ENCODE measurements at regions of chr22 and their contacts with region 1.

Region 1: GRCh38 chr22:26461188-26461810 is 22.3 kb downstream of the HPS4 start:
- DNase-seq: peak in 1 of 2 experiments; percentile 16
- H3K4me3 ChIP-seq: no peak overlapping the region
- H3K27ac ChIP-seq: no peak overlapping the region
- H3K4me1 ChIP-seq: no peaks in the 10 kb centered on the region
- H3K27me3 ChIP-seq: no peaks in the 10 kb centered on the region
- CTCF ChIP-seq: peak; percentile 86

Region 2: DNA sequence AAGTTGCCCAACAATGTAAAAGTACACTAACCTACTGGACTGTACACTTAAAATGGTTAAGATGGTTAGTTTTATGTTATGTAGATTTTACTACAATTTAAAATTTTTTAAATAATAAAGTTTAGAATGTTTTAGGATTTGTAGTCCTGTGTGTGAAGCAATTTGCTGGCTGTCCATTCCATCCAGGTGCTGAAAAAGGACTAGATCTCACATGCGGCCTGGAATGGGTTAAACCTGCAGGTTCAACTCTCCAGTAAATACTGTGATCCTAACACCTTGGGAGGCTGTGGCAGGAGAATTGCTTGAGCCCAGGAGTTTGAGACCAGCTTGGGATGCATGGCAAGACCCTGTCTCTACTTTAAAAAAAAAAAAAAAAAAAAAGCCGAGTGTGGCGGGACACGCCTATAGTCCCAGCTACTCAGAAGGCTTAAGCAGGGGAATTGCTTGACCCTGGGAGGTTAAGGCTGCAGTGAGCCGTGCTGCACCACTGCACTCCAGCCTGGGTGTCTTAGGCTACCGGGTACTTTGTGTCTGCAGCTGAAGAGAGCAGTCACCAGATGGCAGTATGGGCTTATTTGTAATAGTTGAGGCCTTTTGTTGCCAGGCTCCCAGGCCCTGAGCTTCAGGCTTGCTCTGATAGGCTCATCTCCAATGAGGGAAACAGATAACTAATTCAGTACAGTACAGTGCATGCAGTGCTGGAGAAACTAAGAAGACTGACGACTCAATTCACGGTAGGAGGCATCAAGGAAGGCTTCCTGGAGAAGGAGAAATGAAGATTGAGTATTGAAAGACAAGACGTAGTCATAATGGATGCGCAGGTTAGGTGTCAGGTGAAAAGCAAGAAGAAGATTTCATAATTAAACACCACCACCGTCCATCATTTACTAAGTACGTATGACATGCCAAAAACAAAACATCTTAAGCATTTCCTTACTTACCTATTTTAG is 97.0 kb before region 1 on chr22:
- CTCF ChIA-PET with region 1: interaction called, 3 read pairs
- POLR2A ChIA-PET with region 1: no interaction called
- intact Hi-C with region 1: loop called (anchors 1 kb)
- DNase-seq: peak; percentile 37 to 55
- H3K4me3 ChIP-seq: no peak overlapping the region
- H3K27ac ChIP-seq: no peak overlapping the region
- H3K4me1 ChIP-seq: no peaks in the 10 kb centered on the region
- H3K27me3 ChIP-seq: peaks cover 19% of the 10 kb centered on the region; the same call in 1 of the 2 replicates
- CTCF ChIP-seq: peak; percentile 65

Region 3: GRCh38 chr22:26374391-26375026 is 86.8 kb before region 1 on chr22:
- CTCF ChIA-PET with region 1: interaction called, 14 read pairs
- POLR2A ChIA-PET with region 1: no interaction called
- intact Hi-C with region 1: no loop called
- DNase-seq: no peak
- H3K4me3 ChIP-seq: no peak overlapping the region
- H3K27ac ChIP-seq: no peak overlapping the region
- H3K4me1 ChIP-seq: no peaks in the 10 kb centered on the region
- H3K27me3 ChIP-seq: peaks cover 75% of the 10 kb centered on the region
- CTCF ChIP-seq: no peak

Region 4: DNA sequence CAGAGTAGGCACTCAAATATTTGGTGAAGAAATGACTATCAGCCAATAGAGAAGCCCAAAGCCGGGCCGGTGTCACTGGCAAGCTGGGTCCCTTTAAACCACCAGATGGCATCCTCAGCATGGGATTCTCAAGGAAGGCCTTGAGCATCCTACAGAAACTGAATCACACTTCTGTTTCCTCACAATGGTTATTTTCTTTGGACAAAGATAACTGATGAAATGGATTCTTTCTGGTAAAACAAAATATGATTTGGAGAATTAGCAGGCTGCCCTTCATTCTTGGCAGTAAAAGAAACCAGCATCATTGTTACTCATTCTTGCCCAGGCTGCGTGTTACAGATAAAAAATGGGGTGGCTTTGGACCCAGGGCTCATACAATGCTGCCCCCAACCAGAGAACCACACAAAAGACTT is 62.6 kb before region 1 on chr22:
- CTCF ChIA-PET with region 1: interaction called, 6 read pairs
- POLR2A ChIA-PET with region 1: no interaction called
- intact Hi-C with region 1: loop called (anchors 1 kb)
- DNase-seq: peak; percentile 34 to 37
- H3K4me3 ChIP-seq: no peak overlapping the region
- H3K27ac ChIP-seq: no peak overlapping the region
- H3K4me1 ChIP-seq: no peaks in the 10 kb centered on the region
- H3K27me3 ChIP-seq: peaks cover 79% of the 10 kb centered on the region
- CTCF ChIP-seq: peak; percentile 67

Measured in PC-9 (cell line).